ENCODE measurements at regions of chr11 and their contacts with region 1.

Region 1: GRCh38 chr11:7892840-7893254 is 38.2 kb downstream of the OR10A6 start:
- DNase-seq: peak; percentile 56
- CTCF ChIP-seq: peak; percentile 70

Region 2: DNA sequence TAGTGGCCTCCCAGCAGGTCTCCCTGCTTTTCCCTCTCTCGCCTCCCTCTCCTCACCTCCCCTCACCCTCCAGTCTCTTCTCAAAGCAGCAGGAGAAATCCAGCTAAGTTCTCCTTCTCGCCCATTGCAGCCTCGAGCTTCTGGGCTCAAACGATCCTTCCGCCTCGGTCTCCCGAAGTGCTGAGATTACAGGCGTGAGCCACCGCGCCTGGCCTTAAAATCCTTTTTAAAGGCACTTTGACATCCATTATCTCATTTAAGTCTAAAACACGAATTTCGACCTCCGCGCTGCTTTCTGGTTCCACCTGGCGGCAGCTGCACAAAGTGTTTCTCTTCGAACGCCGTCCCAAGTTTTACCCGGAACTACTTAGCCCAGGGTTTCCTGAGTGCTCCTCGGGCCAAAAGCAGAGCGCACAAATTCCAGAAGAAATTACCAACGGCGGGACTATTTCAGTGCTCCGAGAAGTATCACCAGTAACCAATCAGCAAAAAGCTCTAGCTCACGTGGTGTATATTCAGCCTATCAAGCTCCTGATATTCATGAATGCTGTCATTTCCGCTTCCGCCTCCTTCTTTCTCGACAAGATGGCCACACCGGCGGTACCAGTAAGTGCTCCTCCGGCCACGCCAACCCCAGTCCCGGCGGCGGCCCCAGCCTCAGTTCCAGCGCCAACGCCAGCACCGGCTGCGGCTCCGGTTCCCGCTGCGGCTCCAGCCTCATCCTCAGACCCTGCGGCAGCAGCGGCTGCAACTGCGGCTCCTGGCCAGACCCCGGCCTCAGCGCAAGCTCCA is 94.1 kb after region 1 on chr11 and contains the start of gene EIF3F:
- in situ Hi-C with region 1: loop called (anchors 10 kb)
- DNase-seq: peak; percentile 93
- CTCF ChIP-seq: peak; percentile 87

Region 3: DNA sequence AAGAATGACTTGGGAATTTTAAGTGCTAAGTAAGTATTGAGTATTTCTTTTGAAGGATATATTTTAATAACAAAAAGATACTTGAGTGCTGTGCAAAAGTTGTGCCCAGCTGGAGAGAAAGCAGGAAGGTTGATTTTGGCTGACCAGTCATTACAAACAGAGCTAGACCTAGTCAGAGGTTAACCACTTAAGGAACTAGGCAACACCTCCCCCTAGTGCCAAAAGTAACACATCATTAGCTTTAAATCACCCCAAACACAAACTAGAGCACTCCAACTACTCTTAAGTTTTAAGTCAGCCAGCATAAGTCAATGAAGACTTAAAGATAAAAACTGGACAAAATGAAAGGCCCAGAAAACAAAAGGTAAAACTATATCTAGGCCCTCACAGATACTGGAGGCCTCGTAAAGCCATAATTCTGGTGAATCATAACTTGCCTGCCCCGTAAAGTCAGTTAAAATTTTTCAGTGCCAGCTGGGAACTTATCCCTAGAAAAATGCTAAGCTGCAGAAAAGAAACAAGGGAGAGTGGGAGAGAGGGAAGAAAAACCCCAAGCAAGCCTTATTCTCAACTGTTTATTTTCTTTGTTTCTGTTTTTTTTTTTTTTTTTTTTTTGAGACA is 1066.8 kb after region 1 on chr11:
- in situ Hi-C with region 1: no loop called
- DNase-seq: peak; percentile 85
- CTCF ChIP-seq: peak; percentile 66